CD4-positive, alpha-beta memory T cell (primary cell): ENCODE measurements at regions of chr1 and their contacts with region 1.

Region 1: GRCh38 chr1:9292361-9293240 is at the start of gene SPSB1:
- DNase-seq: peak; percentile 46 to 67 (median 56)
- H3K4me3 ChIP-seq: peak within 1 kb of the TSS; percentile 64 to 85
- H3K4me3 Mint-ChIP-seq: peak within 1 kb of the TSS; percentile 68 to 78 (median 75)
- H3K27ac ChIP-seq: peak within 1 kb of the TSS; percentile 27
- H3K27ac Mint-ChIP-seq: peak within 1 kb of the TSS in 5 of 7 donors; percentile 40 to 87 (median 66)
- H3K4me1 ChIP-seq: peaks cover 31% of the 10 kb centered on the region
- H3K4me1 Mint-ChIP-seq: peaks cover 17 to 35% (median 26%) of the 10 kb centered on the region in 4 donors
- H3K27me3 ChIP-seq: no peaks in the 10 kb centered on the region
- H3K27me3 Mint-ChIP-seq: no peaks in the 10 kb centered on the region
- total RNA-seq, gene SPSB1: 3.3 to 4.1 TPM

Region 2: DNA sequence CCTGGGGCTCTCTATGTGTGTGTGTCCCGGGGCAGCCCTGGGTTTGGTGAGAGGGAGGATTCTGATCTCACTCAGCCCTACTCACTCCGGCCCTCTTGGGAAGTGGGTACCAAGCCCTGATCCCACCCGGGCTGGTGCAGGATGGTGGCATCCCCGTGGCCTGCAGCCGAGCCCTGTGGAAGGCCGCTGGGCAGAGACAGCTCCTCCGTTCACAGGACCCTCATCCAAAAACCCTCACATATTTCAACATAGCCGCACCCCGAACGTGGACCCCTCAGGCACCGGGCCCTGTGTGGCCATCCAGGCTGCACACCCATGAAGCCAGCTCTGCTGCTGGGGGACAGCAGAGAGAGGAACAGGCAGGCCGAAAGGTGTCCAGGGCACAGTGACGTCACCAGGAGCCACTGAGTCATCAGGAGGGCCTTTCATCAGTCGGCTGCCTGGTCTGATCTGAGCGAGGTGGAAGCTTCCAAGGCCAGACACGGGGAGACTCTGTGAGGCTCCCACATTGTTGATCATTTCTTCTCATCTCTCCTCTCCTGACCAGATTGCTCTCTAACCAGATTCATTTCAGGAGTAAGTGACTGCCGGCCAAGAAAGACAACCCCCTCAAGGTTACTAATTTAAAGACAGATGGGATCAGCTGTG is 147.5 kb before region 1 on chr1:
- CTCF ChIA-PET with region 1: interaction called, 5 read pairs
- POLR2A ChIA-PET with region 1: no interaction called
- intact Hi-C with region 1: loop called (anchors 1 kb)
- DNase-seq: no peak
- H3K4me3 ChIP-seq: no peak overlapping the region
- H3K4me3 Mint-ChIP-seq: no peak overlapping the region
- H3K27ac ChIP-seq: no peak overlapping the region
- H3K27ac Mint-ChIP-seq: no peak overlapping the region
- H3K4me1 ChIP-seq: no peaks in the 10 kb centered on the region
- H3K4me1 Mint-ChIP-seq: peaks cover 3 to 5% (median 4%) of the 10 kb centered on the region in 4 donors
- H3K27me3 ChIP-seq: no peaks in the 10 kb centered on the region
- H3K27me3 Mint-ChIP-seq: peaks cover 1 to 6% of the 10 kb centered on the region in 2 donors

Region 3: DNA sequence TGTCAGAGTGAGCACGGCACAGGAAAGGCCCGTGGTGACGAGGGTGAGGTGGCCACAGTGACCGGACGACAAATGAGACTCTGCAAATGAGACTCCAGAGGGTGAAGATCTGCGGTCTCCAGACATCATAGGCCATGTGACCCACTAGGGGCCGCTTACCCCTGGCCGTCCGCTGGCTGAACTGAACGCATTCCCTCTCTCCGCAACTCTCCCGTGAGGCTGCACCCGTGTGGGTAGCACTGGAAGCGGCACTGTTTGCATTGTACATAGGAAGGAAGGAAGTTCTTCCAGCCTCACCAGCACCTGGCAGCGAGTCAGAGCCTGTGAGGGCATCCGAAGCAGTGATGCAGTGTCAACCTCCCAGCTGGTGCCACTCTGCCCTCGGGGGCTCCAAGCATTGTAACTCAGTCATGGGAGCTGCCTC is 23.5 kb before region 1 on chr1:
- CTCF ChIA-PET with region 1: interaction called, 10 read pairs
- POLR2A ChIA-PET with region 1: no interaction called
- intact Hi-C with region 1: no loop called
- DNase-seq: no peak
- H3K4me3 ChIP-seq: no peak overlapping the region
- H3K4me3 Mint-ChIP-seq: no peak overlapping the region
- H3K27ac ChIP-seq: no peak overlapping the region
- H3K27ac Mint-ChIP-seq: no peak overlapping the region
- H3K4me1 ChIP-seq: peaks cover 5% of the 10 kb centered on the region
- H3K4me1 Mint-ChIP-seq: peaks cover 0 to 9% (median 3%) of the 10 kb centered on the region in 4 donors
- H3K27me3 ChIP-seq: no peaks in the 10 kb centered on the region
- H3K27me3 Mint-ChIP-seq: no peaks in the 10 kb centered on the region

Region 4: GRCh38 chr1:9428601-9429341 is 136.2 kb after region 1 on chr1:
- CTCF ChIA-PET with region 1: no interaction called
- POLR2A ChIA-PET with region 1: interaction called, 4 read pairs
- intact Hi-C with region 1: loop called (anchors 10 kb)
- DNase-seq: peak; percentile 99
- H3K4me3 ChIP-seq: peak overlapping the region; percentile 53 to 58
- H3K4me3 Mint-ChIP-seq: peak overlapping the region; percentile 91 to 99 (median 96)
- H3K27ac ChIP-seq: peak overlapping the region; percentile 71
- H3K27ac Mint-ChIP-seq: peak overlapping the region; percentile 98 to 100 (median 99)
- H3K4me1 ChIP-seq: peaks cover 47% of the 10 kb centered on the region
- H3K4me1 Mint-ChIP-seq: peaks cover 38 to 58% (median 49%) of the 10 kb centered on the region in 4 donors
- H3K27me3 ChIP-seq: no peaks in the 10 kb centered on the region
- H3K27me3 Mint-ChIP-seq: peaks cover 0 to 5% of the 10 kb centered on the region in 2 donors

Region 5: DNA sequence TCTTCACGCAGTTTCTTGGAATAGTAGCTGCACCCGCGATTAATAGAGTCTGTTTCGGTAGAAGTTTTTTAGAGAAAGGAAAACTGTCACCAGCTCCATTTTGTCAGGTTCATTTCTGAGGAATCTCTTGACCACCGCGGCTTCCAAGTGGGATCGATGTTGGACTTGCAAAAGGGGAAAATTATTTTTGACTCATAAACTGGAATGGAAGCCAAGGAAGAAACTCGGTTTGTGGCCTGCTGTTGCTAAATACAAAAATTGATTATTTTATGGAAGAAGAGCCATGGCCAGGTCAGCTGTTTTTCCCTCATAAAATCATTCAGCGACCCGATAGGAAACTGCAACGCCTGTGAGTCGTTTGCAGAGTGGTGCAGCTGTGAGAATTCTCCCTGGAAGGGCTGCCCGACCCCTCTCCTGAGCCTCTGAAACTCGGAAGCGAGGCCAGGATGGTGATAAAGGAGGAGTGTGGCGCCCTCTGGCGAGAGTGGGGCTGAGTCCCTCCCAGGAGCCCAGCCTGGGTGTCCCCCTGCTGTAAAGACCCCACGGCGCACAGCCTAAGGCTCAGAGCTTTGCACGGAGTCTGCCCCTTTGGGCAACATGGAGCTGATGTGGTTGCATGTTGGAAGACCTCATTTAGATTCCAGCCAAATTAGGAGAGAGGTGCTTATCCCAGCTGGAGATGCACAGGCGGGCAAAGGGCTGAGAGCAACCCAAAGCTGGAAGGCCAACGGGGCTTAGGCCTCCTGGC is 163.1 kb after region 1 on chr1:
- CTCF ChIA-PET with region 1: interaction called, 190 read pairs
- POLR2A ChIA-PET with region 1: interaction called, 13 read pairs
- intact Hi-C with region 1: no loop called
- DNase-seq: peak; percentile 42 to 56 (median 49)
- H3K4me3 ChIP-seq: no peak overlapping the region
- H3K4me3 Mint-ChIP-seq: no peak overlapping the region
- H3K27ac ChIP-seq: no peak overlapping the region
- H3K27ac Mint-ChIP-seq: no peak overlapping the region
- H3K4me1 ChIP-seq: no peaks in the 10 kb centered on the region
- H3K4me1 Mint-ChIP-seq: no peaks in the 10 kb centered on the region
- H3K27me3 ChIP-seq: no peaks in the 10 kb centered on the region
- H3K27me3 Mint-ChIP-seq: peaks cover 2 to 3% of the 10 kb centered on the region in 2 donors

Region 6: GRCh38 chr1:9486466-9487140 is 194.0 kb after region 1 on chr1:
- CTCF ChIA-PET with region 1: interaction called, 82 read pairs
- POLR2A ChIA-PET with region 1: interaction called, 3 read pairs
- intact Hi-C with region 1: loop called (anchors 1 kb)
- DNase-seq: no peak
- H3K4me3 ChIP-seq: no peak overlapping the region
- H3K4me3 Mint-ChIP-seq: no peak overlapping the region
- H3K27ac ChIP-seq: no peak overlapping the region
- H3K27ac Mint-ChIP-seq: no peak overlapping the region
- H3K4me1 ChIP-seq: no peaks in the 10 kb centered on the region
- H3K4me1 Mint-ChIP-seq: peaks cover 0 to 3% (median 1%) of the 10 kb centered on the region in 4 donors
- H3K27me3 ChIP-seq: no peaks in the 10 kb centered on the region
- H3K27me3 Mint-ChIP-seq: peaks cover 7% of the 10 kb centered on the region in 2 donors

Region 7: DNA sequence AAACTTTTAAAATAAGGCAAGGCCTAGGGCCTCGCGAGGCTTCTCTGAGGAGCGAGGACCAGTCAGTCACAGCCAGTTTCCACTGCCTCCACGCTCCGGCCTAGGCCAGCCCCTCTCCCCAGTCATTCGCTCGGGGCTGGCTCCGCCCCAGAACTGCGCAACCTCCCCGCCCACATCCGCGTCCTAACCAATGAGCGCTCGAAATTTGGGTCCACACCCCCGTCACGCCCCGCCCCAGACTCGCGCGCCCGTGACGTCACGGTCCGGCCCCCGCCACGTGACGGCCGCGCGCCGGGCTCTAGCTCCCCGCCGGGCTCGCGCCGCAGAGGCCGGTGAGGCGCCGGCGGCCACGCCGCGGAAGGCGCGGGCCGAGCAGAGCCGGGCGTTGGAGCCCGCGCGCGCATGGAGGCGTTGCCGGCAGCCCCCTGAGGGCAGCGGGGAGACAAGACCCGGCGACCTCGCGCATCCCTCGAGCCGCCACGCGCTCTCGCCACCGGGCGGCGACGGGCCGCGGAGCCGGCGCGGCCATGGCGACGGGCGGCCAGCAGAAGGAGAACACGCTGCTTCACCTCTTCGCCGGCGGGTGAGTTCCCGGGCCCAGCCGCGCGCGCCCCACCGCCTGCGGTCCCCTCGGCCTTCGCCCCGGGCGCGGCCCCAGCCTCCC is 246.7 kb after region 1 on chr1 and contains the start of gene SLC25A33:
- CTCF ChIA-PET with region 1: no interaction called
- POLR2A ChIA-PET with region 1: no interaction called
- intact Hi-C with region 1: no loop called
- DNase-seq: peak; percentile 91 to 97 (median 94)
- H3K4me3 ChIP-seq: peak within 1 kb of the TSS; percentile 19 to 66
- H3K4me3 Mint-ChIP-seq: peak within 1 kb of the TSS; percentile 86 to 91 (median 89)
- H3K27ac ChIP-seq: peak within 1 kb of the TSS; percentile 59
- H3K27ac Mint-ChIP-seq: peak within 1 kb of the TSS; percentile 88 to 95 (median 91)
- H3K4me1 ChIP-seq: peaks cover 19% of the 10 kb centered on the region
- H3K4me1 Mint-ChIP-seq: peaks cover 17 to 39% (median 26%) of the 10 kb centered on the region in 4 donors
- H3K27me3 ChIP-seq: no peaks in the 10 kb centered on the region
- H3K27me3 Mint-ChIP-seq: no peaks in the 10 kb centered on the region
- total RNA-seq, gene SLC25A33: 2.5 to 3.1 TPM

Region 8: GRCh38 chr1:9573723-9574122 is 281.1 kb after region 1 on chr1:
- CTCF ChIA-PET with region 1: no interaction called
- POLR2A ChIA-PET with region 1: no interaction called
- intact Hi-C with region 1: loop called (anchors 10 kb)
- DNase-seq: peak in 3 of 5 donors; percentile 13 to 22 (median 20)
- H3K4me3 ChIP-seq: no peak overlapping the region
- H3K4me3 Mint-ChIP-seq: no peak overlapping the region
- H3K27ac ChIP-seq: no peak overlapping the region
- H3K27ac Mint-ChIP-seq: peak overlapping the region in 1 of 7 donors; percentile 13
- H3K4me1 ChIP-seq: no peaks in the 10 kb centered on the region
- H3K4me1 Mint-ChIP-seq: peaks cover 0 to 1% (median 0%) of the 10 kb centered on the region in 4 donors
- H3K27me3 ChIP-seq: no peaks in the 10 kb centered on the region
- H3K27me3 Mint-ChIP-seq: no peaks in the 10 kb centered on the region